B cell (primary cell): ENCODE measurements at regions of chr1 and their contacts with region 1.

Region 1: DNA sequence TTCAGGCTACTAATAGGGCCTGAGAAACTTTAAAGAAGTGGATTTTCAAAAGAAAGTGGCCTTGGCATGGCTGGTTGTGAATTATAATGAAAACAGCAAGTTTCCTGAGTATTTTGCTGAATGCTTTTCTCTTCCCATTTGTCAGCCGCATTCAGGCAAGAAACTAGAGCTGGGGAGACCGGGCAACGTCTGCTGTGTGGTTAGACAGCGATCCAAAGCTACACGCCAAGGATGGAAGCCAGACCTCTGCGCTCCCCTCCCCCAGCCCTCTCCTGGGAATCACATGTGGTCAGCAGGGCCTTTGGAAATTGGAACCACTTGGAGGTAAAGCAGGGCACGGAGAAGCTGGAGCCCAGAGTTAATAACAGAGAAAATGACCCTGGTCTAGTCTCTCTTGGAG is 114.1 kb upstream of the CD34 start:
- DNase-seq: no peak
- ATAC-seq: no peak
- H3K4me3 ChIP-seq: no peak overlapping the region
- H3K4me3 Mint-ChIP-seq: no peak overlapping the region
- H3K27ac ChIP-seq: no peak overlapping the region
- H3K27ac Mint-ChIP-seq: no peak overlapping the region
- H3K4me1 ChIP-seq: no peaks in the 10 kb centered on the region
- H3K4me1 Mint-ChIP-seq: no peaks in the 10 kb centered on the region
- H3K27me3 ChIP-seq: no peaks in the 10 kb centered on the region
- H3K27me3 Mint-ChIP-seq: peaks cover 4% of the 10 kb centered on the region
- CTCF ChIP-seq: no peak

Region 2: DNA sequence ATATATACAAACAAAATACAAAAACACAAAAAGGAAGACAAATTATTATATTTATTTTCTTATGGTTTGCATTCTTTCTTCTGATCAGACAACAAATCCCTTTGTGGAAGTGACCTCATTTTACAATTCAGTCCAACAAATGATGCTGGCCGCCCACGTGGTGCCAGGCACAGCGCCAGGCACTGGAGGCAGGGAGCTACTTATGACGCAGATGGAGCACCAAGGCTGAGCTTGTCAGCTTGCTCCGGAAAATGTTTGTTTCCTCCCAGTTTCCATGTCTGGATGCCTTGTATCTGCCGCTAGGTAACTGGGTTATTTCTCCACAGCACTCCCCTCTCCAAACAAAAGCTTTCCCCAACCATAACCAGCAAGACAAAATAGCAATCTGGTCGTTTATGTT is 83.4 kb before region 1 on chr1:
- CTCF ChIA-PET with region 1: no interaction called
- POLR2A ChIA-PET with region 1: no interaction called
- intact Hi-C with region 1: no loop called
- DNase-seq: no peak
- ATAC-seq: no peak
- H3K4me3 ChIP-seq: no peak overlapping the region
- H3K4me3 Mint-ChIP-seq: no peak overlapping the region
- H3K27ac ChIP-seq: no peak overlapping the region
- H3K27ac Mint-ChIP-seq: no peak overlapping the region
- H3K4me1 ChIP-seq: no peaks in the 10 kb centered on the region
- H3K4me1 Mint-ChIP-seq: peaks cover 5% of the 10 kb centered on the region
- H3K27me3 ChIP-seq: peaks cover 0 to 14% (median 3%) of the 10 kb centered on the region in 4 experiments
- H3K27me3 Mint-ChIP-seq: peaks cover 16% of the 10 kb centered on the region
- CTCF ChIP-seq: no peak

Region 3: DNA sequence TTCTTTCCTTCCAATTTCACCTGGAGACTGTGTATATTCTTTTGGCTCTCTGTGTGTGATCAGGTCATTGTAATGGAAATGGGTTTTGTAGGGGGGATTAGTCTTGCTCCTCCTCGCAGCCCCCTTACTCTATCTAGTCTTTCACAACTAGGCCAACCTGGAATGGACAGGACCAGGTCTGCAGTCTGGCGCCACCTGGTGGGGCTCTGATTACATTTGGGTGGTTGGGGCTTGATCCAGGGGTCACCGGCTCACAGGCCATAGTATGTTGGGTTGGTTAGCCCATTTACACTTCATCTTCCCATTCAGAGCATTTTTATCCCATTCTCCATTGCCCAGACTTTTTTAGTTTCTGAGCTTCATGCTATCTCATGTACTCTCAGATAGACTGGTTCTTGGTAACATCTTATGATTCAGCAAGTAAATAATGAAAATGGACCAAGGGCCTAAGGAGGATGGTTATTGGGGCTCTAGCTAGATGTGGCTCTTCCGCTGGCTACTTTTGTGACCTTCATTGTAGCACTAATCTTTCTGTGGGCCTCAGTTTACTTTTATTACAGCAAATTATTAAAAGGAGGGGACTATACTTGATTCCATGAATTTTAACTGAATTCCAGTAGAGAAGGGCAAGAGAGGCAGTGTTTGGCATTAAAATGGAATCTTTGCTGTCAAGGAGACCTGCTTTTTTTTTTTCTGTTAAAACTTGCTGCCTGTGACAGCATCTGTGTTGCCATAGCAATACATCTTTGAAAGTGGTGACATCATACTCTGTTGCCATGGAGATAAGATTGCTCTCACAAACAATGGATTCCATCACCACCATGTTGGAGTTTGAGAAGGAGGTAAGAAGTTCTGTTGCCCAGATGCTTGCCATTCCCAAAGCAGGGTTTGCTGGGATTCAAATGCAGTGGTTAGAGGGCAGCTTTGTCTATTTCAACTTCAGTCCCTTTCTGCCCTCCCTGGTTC is 69.0 kb after region 1 on chr1:
- CTCF ChIA-PET with region 1: interaction called, 8 read pairs
- POLR2A ChIA-PET with region 1: interaction called, 7 read pairs
- intact Hi-C with region 1: loop called (anchors 5 kb)
- DNase-seq: peak; percentile 54
- ATAC-seq: no peak
- H3K4me3 ChIP-seq: no peak overlapping the region
- H3K4me3 Mint-ChIP-seq: no peak overlapping the region
- H3K27ac ChIP-seq: no peak overlapping the region
- H3K27ac Mint-ChIP-seq: no peak overlapping the region
- H3K4me1 ChIP-seq: no peaks in the 10 kb centered on the region
- H3K4me1 Mint-ChIP-seq: no peaks in the 10 kb centered on the region
- H3K27me3 ChIP-seq: no peaks in the 10 kb centered on the region
- H3K27me3 Mint-ChIP-seq: no peaks in the 10 kb centered on the region
- CTCF ChIP-seq: peak; percentile 54

Region 4: DNA sequence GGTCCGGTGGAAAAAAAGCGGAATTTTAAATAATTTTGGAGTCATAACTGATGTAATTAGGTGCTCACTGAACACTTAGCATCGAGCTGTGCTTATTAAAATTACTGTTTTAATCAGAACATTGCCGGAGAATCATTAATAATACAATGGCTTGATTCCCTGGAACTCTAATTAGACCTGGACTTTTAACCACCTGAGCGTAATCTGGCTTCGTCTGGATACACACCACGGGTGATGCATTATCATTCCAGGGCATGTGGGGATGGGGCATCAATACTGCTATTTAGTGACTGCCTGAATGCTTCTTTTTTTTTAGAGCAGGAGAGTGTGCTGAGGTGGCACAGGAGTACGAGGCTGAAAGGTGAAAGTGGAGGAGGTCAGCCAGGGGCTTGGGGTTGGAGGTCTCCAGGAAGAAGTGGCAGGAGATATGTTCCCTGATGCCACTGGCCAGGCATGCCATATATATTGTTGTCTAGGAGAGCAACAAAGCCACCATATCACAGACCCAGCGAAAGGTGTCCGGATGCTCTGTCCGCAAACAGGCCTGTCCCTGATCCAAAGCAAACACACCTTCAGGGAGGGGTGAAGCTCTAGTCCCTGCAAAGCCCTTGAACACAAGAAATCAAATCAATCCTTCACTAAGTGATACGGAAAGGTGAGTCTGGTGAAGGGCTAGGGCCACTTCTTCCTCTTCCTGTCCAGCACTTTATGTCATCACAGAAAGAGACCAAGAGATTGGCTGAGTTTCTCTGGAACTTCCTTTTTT is 94.0 kb after region 1 on chr1:
- CTCF ChIA-PET with region 1: no interaction called
- POLR2A ChIA-PET with region 1: no interaction called
- intact Hi-C with region 1: no loop called
- DNase-seq: no peak
- ATAC-seq: no peak
- H3K4me3 ChIP-seq: no peak overlapping the region
- H3K4me3 Mint-ChIP-seq: no peak overlapping the region
- H3K27ac ChIP-seq: no peak overlapping the region
- H3K27ac Mint-ChIP-seq: no peak overlapping the region
- H3K4me1 ChIP-seq: no peaks in the 10 kb centered on the region
- H3K4me1 Mint-ChIP-seq: no peaks in the 10 kb centered on the region
- H3K27me3 ChIP-seq: no peaks in the 10 kb centered on the region
- H3K27me3 Mint-ChIP-seq: no peaks in the 10 kb centered on the region
- CTCF ChIP-seq: no peak